ENCODE measurements at regions of chr7 and their contacts with region 1.

Region 1: GRCh38 chr7:121547544-121548092 is 151.5 kb upstream of the FAM3C start:
- DNase-seq: peak; percentile 51
- H3K4me3 ChIP-seq: no peak overlapping the region
- H3K27ac ChIP-seq: no peak overlapping the region
- H3K4me1 ChIP-seq: peaks cover 8 to 18% of the 10 kb centered on the region in 2 experiments; a peak in 2 of 4 replicates
- H3K27me3 ChIP-seq: no peaks in the 10 kb centered on the region
- CTCF ChIP-seq: peak; percentile 98
- EP300 ChIP-seq: no peak
- RAD21 ChIP-seq: peak; percentile 98

Region 2: DNA sequence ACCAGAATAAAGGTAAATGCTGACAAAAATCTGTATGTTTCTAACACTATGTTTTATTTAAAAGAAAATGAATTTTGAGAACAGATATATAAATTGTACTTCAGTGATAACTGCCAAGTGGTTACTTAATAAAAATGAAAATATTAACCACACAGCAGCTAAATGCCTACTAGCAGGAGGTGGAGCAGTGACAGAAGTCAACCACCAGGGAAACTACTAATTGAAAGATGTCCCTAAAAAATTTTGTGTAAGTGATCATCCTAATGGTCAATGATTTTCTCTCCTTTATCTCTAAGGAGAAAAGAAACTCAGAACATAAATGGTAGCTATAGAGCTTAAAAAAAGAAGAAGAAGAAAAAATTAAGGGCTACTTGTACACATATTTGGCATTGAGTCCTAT is 195.9 kb before region 1 on chr7:
- CTCF ChIA-PET with region 1: interaction called, 11 read pairs
- POLR2A ChIA-PET with region 1: no interaction called
- DNase-seq: no peak
- H3K4me3 ChIP-seq: no peak overlapping the region; a peak in 1 of 4 replicates
- H3K27ac ChIP-seq: no peak overlapping the region
- H3K4me1 ChIP-seq: no peaks in the 10 kb centered on the region; a peak in 1 of 4 replicates
- H3K27me3 ChIP-seq: no peaks in the 10 kb centered on the region
- CTCF ChIP-seq: peak; percentile 45
- EP300 ChIP-seq: no peak
- RAD21 ChIP-seq: no peak

Region 3: GRCh38 chr7:121360564-121360963 is 187.1 kb before region 1 on chr7:
- CTCF ChIA-PET with region 1: interaction called, 15 read pairs
- POLR2A ChIA-PET with region 1: no interaction called
- DNase-seq: no peak
- H3K4me3 ChIP-seq: no peak overlapping the region
- H3K27ac ChIP-seq: no peak overlapping the region
- H3K4me1 ChIP-seq: no peaks in the 10 kb centered on the region
- H3K27me3 ChIP-seq: no peaks in the 10 kb centered on the region
- CTCF ChIP-seq: no peak
- EP300 ChIP-seq: no peak
- RAD21 ChIP-seq: no peak

Region 4: GRCh38 chr7:121366852-121367431 is 180.7 kb before region 1 on chr7:
- CTCF ChIA-PET with region 1: interaction called, 94 read pairs
- POLR2A ChIA-PET with region 1: no interaction called
- DNase-seq: peak; percentile 41
- H3K4me3 ChIP-seq: no peak overlapping the region
- H3K27ac ChIP-seq: peak overlapping the region; percentile 12 to 26; a peak in 3 of 4 replicates
- H3K4me1 ChIP-seq: peaks cover 0 to 22% of the 10 kb centered on the region in 2 experiments; a peak in 3 of 4 replicates
- H3K27me3 ChIP-seq: no peaks in the 10 kb centered on the region
- CTCF ChIP-seq: peak; percentile 99
- EP300 ChIP-seq: no peak
- RAD21 ChIP-seq: peak; percentile 94

Region 5: DNA sequence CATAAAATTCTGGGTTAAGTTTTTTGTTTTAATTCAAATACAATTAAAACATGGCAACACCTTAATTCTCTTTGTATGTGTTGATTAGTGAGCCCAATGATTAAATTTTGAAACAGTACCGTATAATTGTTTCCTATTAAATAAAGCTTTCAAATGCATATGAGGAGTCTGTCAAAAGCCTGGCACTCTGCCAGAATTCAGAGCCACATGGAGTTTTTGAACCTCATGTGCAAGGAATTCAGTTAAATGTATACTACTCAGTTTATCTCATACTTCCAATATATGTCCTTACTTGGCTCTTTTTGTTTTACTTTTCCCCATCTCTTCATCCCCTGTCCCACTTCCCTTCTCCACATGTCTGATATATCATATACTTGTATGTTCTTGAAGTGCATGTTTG is 14.1 kb after region 1 on chr7:
- CTCF ChIA-PET with region 1: interaction called, 12 read pairs
- POLR2A ChIA-PET with region 1: no interaction called
- DNase-seq: no peak
- H3K4me3 ChIP-seq: no peak overlapping the region
- H3K27ac ChIP-seq: no peak overlapping the region
- H3K4me1 ChIP-seq: peaks cover 0 to 5% of the 10 kb centered on the region in 2 experiments; a peak in 2 of 4 replicates
- H3K27me3 ChIP-seq: no peaks in the 10 kb centered on the region
- CTCF ChIP-seq: no peak
- EP300 ChIP-seq: no peak
- RAD21 ChIP-seq: no peak

Region 6: DNA sequence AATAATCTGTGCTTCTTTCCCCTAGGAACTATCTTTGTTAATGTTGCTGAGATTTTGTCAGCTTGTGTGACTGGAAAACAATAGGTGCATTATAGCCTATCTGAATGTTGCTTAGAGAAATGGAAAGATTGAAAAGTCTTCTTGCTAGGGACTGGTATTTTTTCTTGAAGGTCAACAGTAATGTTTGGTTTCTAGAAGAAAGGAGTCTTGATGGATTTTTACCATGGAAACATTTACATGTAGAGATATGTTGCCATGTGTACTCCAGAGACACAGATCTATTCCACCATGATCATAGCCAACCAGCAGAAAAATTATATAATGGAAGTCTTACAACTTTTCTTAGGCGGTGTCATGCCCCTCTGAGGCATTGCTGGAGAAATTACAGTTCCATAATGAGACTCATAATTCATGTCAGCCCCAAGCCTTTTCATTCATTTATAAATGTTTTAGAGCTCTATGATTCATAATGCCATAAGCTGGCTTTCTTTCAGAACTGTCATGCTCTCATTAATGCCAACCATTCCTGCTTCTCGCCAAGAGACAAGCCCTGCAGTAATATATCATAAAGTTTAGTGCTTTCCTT is 150.2 kb after region 1 on chr7:
- CTCF ChIA-PET with region 1: no interaction called
- POLR2A ChIA-PET with region 1: no interaction called
- DNase-seq: no peak
- H3K4me3 ChIP-seq: no peak overlapping the region
- H3K27ac ChIP-seq: no peak overlapping the region
- H3K4me1 ChIP-seq: no peaks in the 10 kb centered on the region
- H3K27me3 ChIP-seq: no peaks in the 10 kb centered on the region
- CTCF ChIP-seq: no peak
- EP300 ChIP-seq: no peak
- RAD21 ChIP-seq: no peak